HEK293 (cell line): ENCODE measurements at regions of chr3 and their contacts with region 1.

Region 1: GRCh38 chr3:15955968-15956367 is 158.2 kb upstream of the ANKRD28 start:
- H3K4me3 ChIP-seq: no peak overlapping the region
- H3K27ac ChIP-seq: no peak overlapping the region
- H3K4me1 ChIP-seq: no peaks in the 10 kb centered on the region
- CTCF ChIP-seq: no peak

Region 2: GRCh38 chr3:15974647-15975046 is 18.7 kb after region 1 on chr3:
- CTCF ChIA-PET with region 1: interaction called, 13 read pairs
- POLR2A ChIA-PET with region 1: no interaction called
- H3K4me3 ChIP-seq: no peak overlapping the region
- H3K27ac ChIP-seq: no peak overlapping the region
- H3K4me1 ChIP-seq: no peaks in the 10 kb centered on the region
- CTCF ChIP-seq: no peak

Region 3: DNA sequence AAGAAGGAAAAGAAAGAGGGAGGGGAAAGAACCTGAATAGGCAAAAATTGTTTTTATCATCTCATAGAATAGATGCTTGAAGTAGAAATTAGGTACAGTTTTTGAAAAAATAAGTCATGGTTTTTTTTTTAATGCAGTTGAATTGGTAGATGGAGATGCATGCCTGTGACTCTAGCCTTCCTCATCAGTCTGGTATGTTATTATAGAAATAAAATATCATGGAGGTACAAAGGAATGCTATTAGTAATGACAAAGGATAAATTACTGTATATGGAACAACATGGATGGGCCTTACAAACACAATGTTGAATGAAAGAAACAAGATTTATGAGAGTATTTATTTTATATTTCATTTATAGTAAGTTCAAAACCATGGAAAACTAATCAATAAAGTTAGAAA is 56.1 kb after region 1 on chr3:
- CTCF ChIA-PET with region 1: no interaction called
- POLR2A ChIA-PET with region 1: no interaction called
- H3K4me3 ChIP-seq: no peak overlapping the region
- H3K27ac ChIP-seq: no peak overlapping the region
- H3K4me1 ChIP-seq: no peaks in the 10 kb centered on the region
- CTCF ChIP-seq: no peak